Activated CD8-positive, alpha-beta T cell treated with anti-CD3 and anti-CD28 coated beads, Interleukin-2, amount 10 ng/mL, durations not matched to agents 7 days and 5 days (primary cell): ENCODE measurements at regions of chr3 and their contacts with region 1.

Region 1: DNA sequence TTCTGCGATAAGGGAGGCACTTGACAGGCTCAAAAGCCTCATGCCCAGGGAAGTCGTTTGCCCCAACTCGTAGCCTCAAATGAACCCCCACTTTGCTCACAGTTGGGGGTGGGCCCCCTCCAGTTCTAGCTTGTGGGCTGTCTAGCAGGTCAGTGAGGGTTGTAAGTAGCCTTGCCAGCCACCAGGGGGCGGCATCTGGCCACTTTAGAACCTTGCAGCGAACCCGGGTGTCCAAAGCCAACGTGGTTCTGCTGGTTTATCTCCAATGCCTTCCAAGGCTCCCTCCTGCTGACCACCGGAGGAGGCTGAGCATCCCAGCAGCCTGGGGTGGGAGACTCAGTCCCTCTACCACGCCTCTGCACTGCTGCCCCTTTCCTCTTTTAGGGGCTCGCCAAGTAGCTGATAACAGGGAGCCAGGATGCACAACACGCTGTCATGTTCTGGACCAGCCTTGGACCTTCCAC is 9.2 kb upstream of the RBSN start:
- DNase-seq: peak; percentile 81
- ATAC-seq: peak; percentile 94
- H3K4me3 Mint-ChIP-seq: no peak overlapping the region
- H3K27ac Mint-ChIP-seq: no peak overlapping the region
- H3K4me1 Mint-ChIP-seq: peaks cover 2% of the 10 kb centered on the region
- H3K27me3 Mint-ChIP-seq: peaks cover 7% of the 10 kb centered on the region

Region 2: GRCh38 chr3:15120986-15121385 is 12.9 kb after region 1 on chr3:
- CTCF ChIA-PET with region 1: interaction called, 26 read pairs
- POLR2A ChIA-PET with region 1: no interaction called
- DNase-seq: no peak
- ATAC-seq: no peak
- H3K4me3 Mint-ChIP-seq: no peak overlapping the region
- H3K27ac Mint-ChIP-seq: no peak overlapping the region
- H3K4me1 Mint-ChIP-seq: peaks cover 19% of the 10 kb centered on the region
- H3K27me3 Mint-ChIP-seq: no peaks in the 10 kb centered on the region

Region 3: GRCh38 chr3:15199493-15200105 is 91.5 kb after region 1 on chr3:
- CTCF ChIA-PET with region 1: interaction called, 53 read pairs
- POLR2A ChIA-PET with region 1: no interaction called
- DNase-seq: no peak
- ATAC-seq: no peak
- H3K4me3 Mint-ChIP-seq: no peak overlapping the region
- H3K27ac Mint-ChIP-seq: no peak overlapping the region
- H3K4me1 Mint-ChIP-seq: peaks cover 9% of the 10 kb centered on the region
- H3K27me3 Mint-ChIP-seq: peaks cover 25% of the 10 kb centered on the region

Region 4: GRCh38 chr3:15405448-15406050 is 297.4 kb after region 1 on chr3:
- CTCF ChIA-PET with region 1: interaction called, 19 read pairs
- POLR2A ChIA-PET with region 1: no interaction called
- DNase-seq: peak; percentile 52
- ATAC-seq: peak; percentile 81
- H3K4me3 Mint-ChIP-seq: no peak overlapping the region
- H3K27ac Mint-ChIP-seq: no peak overlapping the region
- H3K4me1 Mint-ChIP-seq: peaks cover 12% of the 10 kb centered on the region
- H3K27me3 Mint-ChIP-seq: peaks cover 1% of the 10 kb centered on the region